GM12878 (cell line): ENCODE measurements at regions of chr11 and their contacts with region 1.

Region 1: DNA sequence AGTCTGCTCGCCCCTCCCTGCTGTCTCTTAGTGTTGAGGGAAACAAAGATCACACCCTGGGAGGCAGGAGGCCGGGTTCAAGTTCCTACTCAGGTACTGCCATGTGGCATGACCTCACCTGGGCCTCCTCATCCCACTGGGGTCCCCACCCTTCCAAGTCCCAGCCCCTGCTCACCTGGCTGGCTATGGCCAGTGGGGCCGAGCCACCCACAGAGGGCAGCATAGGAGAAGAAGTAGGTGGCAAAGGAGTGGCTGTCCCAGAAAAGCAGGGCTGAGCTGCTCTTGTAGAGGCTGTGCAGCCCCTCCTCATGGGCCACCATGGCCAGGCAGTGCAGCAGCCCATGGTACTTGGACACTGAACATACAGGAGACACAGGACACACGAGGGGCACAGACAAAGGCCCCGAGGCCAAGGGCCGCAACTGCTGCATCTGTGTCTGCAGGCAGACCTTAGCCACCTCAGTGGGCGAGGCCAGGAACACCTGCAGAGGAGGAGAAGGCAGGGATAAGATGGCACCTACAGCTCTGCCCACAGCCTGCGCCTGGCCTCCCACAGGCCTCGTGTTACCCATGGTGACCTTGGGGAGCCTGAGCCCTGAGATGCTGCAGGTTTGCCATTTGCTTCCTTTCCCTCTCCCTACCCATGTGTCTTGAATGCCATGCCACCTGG is 50.6 kb upstream of the MPEG1 start:
- DNase-seq: no peak
- ATAC-seq: peak; percentile 53
- H3K4me3 ChIP-seq: no peak overlapping the region
- H3K27ac ChIP-seq: no peak overlapping the region
- H3K4me1 ChIP-seq: peaks cover 30% of the 10 kb centered on the region
- H3K27me3 ChIP-seq: no peaks in the 10 kb centered on the region
- CTCF ChIP-seq: peak; percentile 56 to 71 (median 58)
- EP300 ChIP-seq: no peak
- POLR2A ChIP-seq: no peak
- RAD21 ChIP-seq: peak; percentile 82

Region 2: GRCh38 chr11:59224351-59224928 is 38.9 kb before region 1 on chr11:
- CTCF ChIA-PET with region 1: interaction called, 43 read pairs
- POLR2A ChIA-PET with region 1: no interaction called
- RAD21 ChIA-PET with region 1: interaction called, 8 read pairs
- SMC1A ChIA-PET with region 1: interaction called, 18 read pairs
- in situ Hi-C with region 1: no loop called
- intact Hi-C with region 1: no loop called
- DNase-seq: no peak
- ATAC-seq: peak; percentile 49
- H3K4me3 ChIP-seq: no peak overlapping the region
- H3K27ac ChIP-seq: peak overlapping the region; percentile 50
- H3K4me1 ChIP-seq: peaks cover 45% of the 10 kb centered on the region
- H3K27me3 ChIP-seq: no peaks in the 10 kb centered on the region
- CTCF ChIP-seq: no peak
- EP300 ChIP-seq: no peak
- POLR2A ChIP-seq: no peak
- RAD21 ChIP-seq: no peak

Region 3: GRCh38 chr11:59273373-59273841 is 10.0 kb after region 1 on chr11:
- CTCF ChIA-PET with region 1: interaction called, 12 read pairs
- POLR2A ChIA-PET with region 1: interaction called, 4 read pairs
- RAD21 ChIA-PET with region 1: interaction called, 8 read pairs
- SMC1A ChIA-PET with region 1: interaction called, 14 read pairs
- in situ Hi-C with region 1: no loop called
- intact Hi-C with region 1: no loop called
- DNase-seq: peak; percentile 79
- ATAC-seq: peak; percentile 93
- H3K4me3 ChIP-seq: no peak overlapping the region
- H3K27ac ChIP-seq: peak overlapping the region; percentile 77
- H3K4me1 ChIP-seq: peaks cover 35% of the 10 kb centered on the region
- H3K27me3 ChIP-seq: no peaks in the 10 kb centered on the region
- CTCF ChIP-seq: no peak
- EP300 ChIP-seq: peak; percentile 88 to 96
- POLR2A ChIP-seq: no peak
- RAD21 ChIP-seq: no peak

Region 4: GRCh38 chr11:59365232-59366020 is 102.1 kb after region 1 on chr11:
- CTCF ChIA-PET with region 1: no interaction called
- POLR2A ChIA-PET with region 1: no interaction called
- RAD21 ChIA-PET with region 1: no interaction called
- SMC1A ChIA-PET with region 1: no interaction called
- in situ Hi-C with region 1: no loop called
- intact Hi-C with region 1: no loop called
- DNase-seq: no peak
- ATAC-seq: no peak
- H3K4me3 ChIP-seq: no peak overlapping the region
- H3K27ac ChIP-seq: no peak overlapping the region
- H3K4me1 ChIP-seq: no peaks in the 10 kb centered on the region
- H3K27me3 ChIP-seq: peaks cover 0 to 3% of the 10 kb centered on the region in 2 experiments; a peak in 1 of 4 replicates
- CTCF ChIP-seq: no peak
- EP300 ChIP-seq: no peak
- POLR2A ChIP-seq: no peak
- RAD21 ChIP-seq: no peak